ENCODE measurements at regions of chr7 and their contacts with region 1.

Region 1: GRCh38 chr7:132430861-132431822 is 145.1 kb downstream of the PLXNA4 start:
- DNase-seq: peak; percentile 66 to 84
- ATAC-seq: peak; percentile 82 to 89 (median 86)
- H3K4me3 ChIP-seq: no peak overlapping the region
- H3K4me3 Mint-ChIP-seq: peak overlapping the region; percentile 51
- H3K27ac ChIP-seq: peak overlapping the region; percentile 94
- H3K27ac Mint-ChIP-seq: peak overlapping the region; percentile 82 to 88
- H3K4me1 ChIP-seq: peaks cover 88% of the 10 kb centered on the region
- H3K4me1 Mint-ChIP-seq: peaks cover 81 to 88% of the 10 kb centered on the region in 2 donors
- H3K27me3 ChIP-seq: no peaks in the 10 kb centered on the region
- H3K27me3 Mint-ChIP-seq: no peaks in the 10 kb centered on the region
- CTCF ChIP-seq: no peak

Region 2: DNA sequence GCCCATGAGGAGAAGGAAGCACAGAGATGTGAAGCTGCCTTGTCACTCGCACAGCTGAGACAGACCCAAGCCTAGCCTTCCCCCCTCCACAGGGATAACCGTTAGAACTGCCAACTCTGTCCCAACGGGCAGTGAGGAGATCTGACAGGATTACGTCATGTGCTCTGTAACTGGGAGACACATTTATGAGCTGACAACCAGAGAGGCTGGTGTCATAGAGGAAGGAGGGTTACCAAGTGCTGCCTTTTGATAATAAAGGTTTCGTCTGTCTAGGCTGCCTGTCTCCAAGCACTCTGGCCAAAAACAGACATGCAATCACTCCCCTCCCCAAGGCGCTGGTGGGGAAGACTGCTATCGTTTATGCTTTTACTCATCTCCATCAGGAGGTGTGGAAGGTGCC is 20.8 kb before region 1 on chr7:
- intact Hi-C with region 1: no loop called
- DNase-seq: no peak
- ATAC-seq: peak in 2 of 3 donors; percentile 58 to 80
- H3K4me3 ChIP-seq: no peak overlapping the region
- H3K4me3 Mint-ChIP-seq: no peak overlapping the region
- H3K27ac ChIP-seq: no peak overlapping the region
- H3K27ac Mint-ChIP-seq: peak overlapping the region; percentile 9 to 47
- H3K4me1 ChIP-seq: peaks cover 18% of the 10 kb centered on the region
- H3K4me1 Mint-ChIP-seq: peaks cover 26 to 32% of the 10 kb centered on the region in 2 donors
- H3K27me3 ChIP-seq: no peaks in the 10 kb centered on the region
- H3K27me3 Mint-ChIP-seq: peaks cover 0 to 10% of the 10 kb centered on the region in 2 donors
- CTCF ChIP-seq: no peak

Region 3: GRCh38 chr7:132451161-132451560 is 20.0 kb after region 1 on chr7:
- intact Hi-C with region 1: loop called (anchors 1 kb)
- DNase-seq: peak; percentile 66 to 78
- ATAC-seq: peak; percentile 78 to 86 (median 78)
- H3K4me3 ChIP-seq: no peak overlapping the region
- H3K4me3 Mint-ChIP-seq: peak overlapping the region; percentile 79
- H3K27ac ChIP-seq: peak overlapping the region; percentile 64
- H3K27ac Mint-ChIP-seq: peak overlapping the region; percentile 94 to 96
- H3K4me1 ChIP-seq: peaks cover 73% of the 10 kb centered on the region
- H3K4me1 Mint-ChIP-seq: peaks cover 81 to 90% of the 10 kb centered on the region in 2 donors
- H3K27me3 ChIP-seq: no peaks in the 10 kb centered on the region
- H3K27me3 Mint-ChIP-seq: peaks cover 0 to 3% of the 10 kb centered on the region in 2 donors
- CTCF ChIP-seq: no peak